Endothelial cell of umbilical vein (primary cell): ENCODE measurements at regions of chr13 and their contacts with region 1.

Region 1: GRCh38 chr13:106536244-106537034 is 977 bp upstream of the EFNB2 start:
- DNase-seq: peak; percentile 94
- H3K4me3 ChIP-seq: peak overlapping the region; percentile 16 to 54 (median 53)
- H3K27ac ChIP-seq: peak overlapping the region; percentile 35
- H3K4me1 ChIP-seq: peaks cover 37% of the 10 kb centered on the region
- H3K27me3 ChIP-seq: no peaks in the 10 kb centered on the region
- CTCF ChIP-seq: peak; percentile 95 to 96
- POLR2A ChIP-seq: no peak

Region 2: GRCh38 chr13:104773775-104774174 is 1762.7 kb before region 1 on chr13:
- CTCF ChIA-PET with region 1: interaction called, 23 read pairs
- POLR2A ChIA-PET with region 1: interaction called, 3 read pairs
- dilution Hi-C with region 1: no loop called
- intact Hi-C with region 1: loop called (anchors 1 kb)
- DNase-seq: peak; percentile 54
- H3K4me3 ChIP-seq: no peak overlapping the region
- H3K27ac ChIP-seq: no peak overlapping the region
- H3K4me1 ChIP-seq: no peaks in the 10 kb centered on the region
- H3K27me3 ChIP-seq: no peaks in the 10 kb centered on the region
- CTCF ChIP-seq: peak; percentile 59 to 61
- POLR2A ChIP-seq: no peak

Region 3: GRCh38 chr13:105410602-105411001 is 1125.8 kb before region 1 on chr13:
- CTCF ChIA-PET with region 1: interaction called, 48 read pairs
- POLR2A ChIA-PET with region 1: no interaction called
- dilution Hi-C with region 1: no loop called
- intact Hi-C with region 1: loop called (anchors 1 kb)
- DNase-seq: peak; percentile 52
- H3K4me3 ChIP-seq: peak overlapping the region in 1 of 3 experiments; percentile 55
- H3K27ac ChIP-seq: no peak overlapping the region
- H3K4me1 ChIP-seq: no peaks in the 10 kb centered on the region
- H3K27me3 ChIP-seq: no peaks in the 10 kb centered on the region
- CTCF ChIP-seq: peak; percentile 68 to 80
- POLR2A ChIP-seq: no peak

Region 4: GRCh38 chr13:105735281-105735680 is 801.2 kb before region 1 on chr13:
- CTCF ChIA-PET with region 1: no interaction called
- POLR2A ChIA-PET with region 1: no interaction called
- dilution Hi-C with region 1: no loop called
- intact Hi-C with region 1: loop called (anchors 10 kb)
- DNase-seq: no peak
- H3K4me3 ChIP-seq: no peak overlapping the region
- H3K27ac ChIP-seq: no peak overlapping the region
- H3K4me1 ChIP-seq: no peaks in the 10 kb centered on the region
- H3K27me3 ChIP-seq: no peaks in the 10 kb centered on the region
- CTCF ChIP-seq: no peak
- POLR2A ChIP-seq: no peak

Region 5: DNA sequence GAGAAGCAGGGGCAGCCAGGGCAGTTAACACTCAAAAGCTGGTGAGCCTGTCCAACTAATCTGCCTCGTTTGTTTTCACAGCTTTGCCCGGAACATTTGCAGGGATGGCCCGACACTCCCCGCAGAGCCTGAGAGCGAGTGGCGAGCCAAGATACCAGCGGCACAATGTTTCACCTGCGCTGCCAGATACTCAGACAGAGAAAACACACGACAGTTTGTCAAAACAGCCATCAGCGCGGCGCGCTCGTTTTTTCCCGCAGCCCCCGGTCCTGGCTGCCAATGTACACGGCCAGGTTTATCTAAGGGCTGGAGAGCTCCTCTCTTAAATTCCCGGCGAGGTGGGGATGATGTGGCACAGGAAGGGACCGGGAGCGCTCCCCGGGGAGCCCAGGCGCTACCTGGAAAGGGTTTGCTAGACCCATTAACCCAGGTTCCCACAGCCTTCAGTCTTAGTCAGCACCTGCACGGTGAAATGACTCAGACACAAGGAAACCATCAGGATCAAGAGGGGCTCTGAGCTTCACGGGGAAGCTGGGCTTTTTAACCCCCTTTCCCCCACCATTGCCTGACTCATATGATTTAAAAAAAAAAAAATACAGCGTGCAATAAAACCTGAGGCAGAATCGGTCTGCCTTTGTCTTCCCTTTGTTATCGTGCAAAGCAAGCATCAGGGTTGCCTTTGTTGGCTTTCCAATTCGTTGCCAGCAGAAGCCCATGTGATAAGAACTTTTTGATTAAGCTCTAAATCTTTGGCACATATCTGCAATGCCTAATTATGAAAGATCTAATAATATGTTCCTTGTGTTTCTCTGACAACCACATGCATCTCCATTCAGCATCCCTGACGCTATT is 187.1 kb before region 1 on chr13:
- CTCF ChIA-PET with region 1: no interaction called
- POLR2A ChIA-PET with region 1: interaction called, 7 read pairs
- dilution Hi-C with region 1: no loop called
- intact Hi-C with region 1: loop called (anchors 1 kb)
- DNase-seq: peak; percentile 99
- H3K4me3 ChIP-seq: peak overlapping the region in 2 of 3 experiments; percentile 17 to 52
- H3K27ac ChIP-seq: peak overlapping the region; percentile 98
- H3K4me1 ChIP-seq: peaks cover 30% of the 10 kb centered on the region
- H3K27me3 ChIP-seq: no peaks in the 10 kb centered on the region
- CTCF ChIP-seq: no peak
- POLR2A ChIP-seq: peak; percentile 71

Region 6: GRCh38 chr13:106581225-106581624 is 44.8 kb after region 1 on chr13:
- CTCF ChIA-PET with region 1: no interaction called
- POLR2A ChIA-PET with region 1: no interaction called
- dilution Hi-C with region 1: no loop called
- intact Hi-C with region 1: no loop called
- DNase-seq: no peak
- H3K4me3 ChIP-seq: no peak overlapping the region
- H3K27ac ChIP-seq: no peak overlapping the region
- H3K4me1 ChIP-seq: no peaks in the 10 kb centered on the region
- H3K27me3 ChIP-seq: peaks cover 2 to 6% of the 10 kb centered on the region in 2 experiments
- CTCF ChIP-seq: no peak
- POLR2A ChIP-seq: no peak

Region 7: GRCh38 chr13:106680796-106681472 is 144.5 kb after region 1 on chr13:
- CTCF ChIA-PET with region 1: no interaction called
- POLR2A ChIA-PET with region 1: no interaction called
- dilution Hi-C with region 1: no loop called
- intact Hi-C with region 1: loop called (anchors 5 kb)
- DNase-seq: peak; percentile 81
- H3K4me3 ChIP-seq: no peak overlapping the region
- H3K27ac ChIP-seq: peak overlapping the region; percentile 22
- H3K4me1 ChIP-seq: peaks cover 25% of the 10 kb centered on the region
- H3K27me3 ChIP-seq: no peaks in the 10 kb centered on the region
- CTCF ChIP-seq: no peak
- POLR2A ChIP-seq: no peak